GM12878 (cell line): ENCODE measurements at regions of chr17 and their contacts with region 1.

Region 1: GRCh38 chr17:42248351-42249179 is 27.6 kb downstream of the STAT5B start:
- DNase-seq: peak; percentile 68
- ATAC-seq: peak; percentile 99
- H3K4me3 ChIP-seq: peak overlapping the region; percentile 70
- H3K27ac ChIP-seq: peak overlapping the region; percentile 88
- H3K4me1 ChIP-seq: peaks cover 27% of the 10 kb centered on the region
- H3K27me3 ChIP-seq: no peaks in the 10 kb centered on the region
- CTCF ChIP-seq: no peak
- EP300 ChIP-seq: no peak
- POLR2A ChIP-seq: peak; percentile 81
- RAD21 ChIP-seq: no peak

Region 2: DNA sequence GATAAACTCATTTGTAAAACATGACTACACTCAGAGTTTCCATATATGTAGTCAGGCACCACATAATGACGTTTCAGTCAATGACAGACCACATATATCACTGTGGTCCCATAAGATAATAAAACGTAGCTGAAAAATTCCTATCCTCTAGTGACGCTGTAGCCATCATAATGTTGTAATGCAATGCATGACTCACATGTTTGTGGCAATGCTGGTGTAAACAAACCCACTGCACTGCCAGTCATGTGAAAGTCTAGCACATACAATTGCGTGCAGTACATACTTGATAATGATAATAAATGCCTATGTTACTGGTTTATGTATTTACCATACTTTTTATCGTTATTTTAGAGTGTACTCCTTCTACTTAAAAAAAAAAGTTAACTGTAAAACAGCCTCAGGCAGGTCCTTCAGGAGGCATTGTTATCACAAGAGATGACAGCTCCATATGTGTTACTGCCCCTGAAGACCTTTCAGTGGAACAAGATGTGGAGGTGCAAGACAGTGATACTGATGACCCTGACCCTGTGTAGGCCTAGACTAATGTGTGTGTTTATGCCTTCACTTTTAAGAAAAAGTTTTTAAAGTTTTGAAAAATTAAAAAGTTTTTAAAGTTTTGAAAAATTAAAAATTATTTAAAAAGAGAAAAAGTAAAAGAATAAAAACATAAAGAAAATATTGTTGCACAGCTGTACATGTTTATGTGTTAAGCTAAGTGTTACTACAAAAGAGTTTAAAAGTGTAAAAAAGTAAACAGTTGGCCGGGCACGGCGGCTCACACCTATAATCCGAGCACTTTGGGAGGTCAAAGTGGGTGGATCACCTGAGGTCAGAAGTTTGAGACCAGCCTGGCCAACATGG is 18.6 kb after region 1 on chr17:
- CTCF ChIA-PET with region 1: interaction called, 6 read pairs
- POLR2A ChIA-PET with region 1: interaction called, 5 read pairs
- RAD21 ChIA-PET with region 1: interaction called, 9 read pairs
- SMC1A ChIA-PET with region 1: interaction called, 36 read pairs
- in situ Hi-C with region 1: no loop called
- intact Hi-C with region 1: no loop called
- DNase-seq: no peak
- ATAC-seq: no peak; the same call in 2 of the 3 replicates
- H3K4me3 ChIP-seq: no peak overlapping the region
- H3K27ac ChIP-seq: no peak overlapping the region
- H3K4me1 ChIP-seq: peaks cover 9% of the 10 kb centered on the region
- H3K27me3 ChIP-seq: no peaks in the 10 kb centered on the region
- CTCF ChIP-seq: no peak
- EP300 ChIP-seq: no peak
- POLR2A ChIP-seq: no peak
- RAD21 ChIP-seq: no peak